Activated CD8-positive, alpha-beta T cell treated with anti-CD3 and anti-CD28 coated beads for 36 hours (primary cell): ENCODE measurements at regions of chr6 and their contacts with region 1.

Region 1: GRCh38 chr6:122491919-122492555 is 20.4 kb upstream of the SERINC1 start:
- DNase-seq: peak; percentile 86
- ATAC-seq: peak; percentile 98
- H3K4me3 Mint-ChIP-seq: no peak overlapping the region
- H3K27ac Mint-ChIP-seq: no peak overlapping the region
- H3K4me1 Mint-ChIP-seq: peaks cover 9% of the 10 kb centered on the region
- H3K27me3 Mint-ChIP-seq: no peaks in the 10 kb centered on the region
- CTCF ChIP-seq: peak; percentile 88

Region 2: GRCh38 chr6:122381497-122382265 is 110.4 kb before region 1 on chr6:
- CTCF ChIA-PET with region 1: interaction called, 13 read pairs
- POLR2A ChIA-PET with region 1: no interaction called
- intact Hi-C with region 1: no loop called
- DNase-seq: peak; percentile 75
- ATAC-seq: peak; percentile 94
- H3K4me3 Mint-ChIP-seq: no peak overlapping the region
- H3K27ac Mint-ChIP-seq: no peak overlapping the region
- H3K4me1 Mint-ChIP-seq: peaks cover 4% of the 10 kb centered on the region
- H3K27me3 Mint-ChIP-seq: peaks cover 4% of the 10 kb centered on the region
- CTCF ChIP-seq: peak; percentile 72

Region 3: DNA sequence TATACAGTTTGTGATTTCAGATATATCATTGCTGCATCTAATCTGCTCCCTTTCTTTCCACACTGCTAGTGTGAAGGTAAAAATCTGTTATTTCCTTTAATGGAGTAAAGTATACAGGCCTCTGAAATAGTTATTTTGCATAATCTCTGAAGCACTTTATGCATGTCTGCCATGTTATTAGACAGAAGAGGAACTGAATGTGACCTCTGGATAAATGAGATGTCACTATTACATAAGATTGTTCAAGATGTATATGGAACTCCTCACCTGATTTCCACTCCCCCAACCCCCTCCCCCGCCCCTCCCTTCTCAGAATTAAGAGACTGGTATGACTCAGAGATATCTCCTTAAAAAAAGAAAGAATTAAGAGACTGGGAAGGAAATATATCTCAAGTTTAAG is 46.8 kb before region 1 on chr6:
- CTCF ChIA-PET with region 1: no interaction called
- POLR2A ChIA-PET with region 1: no interaction called
- intact Hi-C with region 1: no loop called
- DNase-seq: no peak
- ATAC-seq: no peak
- H3K4me3 Mint-ChIP-seq: no peak overlapping the region
- H3K27ac Mint-ChIP-seq: peak overlapping the region; percentile 28
- H3K4me1 Mint-ChIP-seq: peaks cover 7% of the 10 kb centered on the region
- H3K27me3 Mint-ChIP-seq: no peaks in the 10 kb centered on the region
- CTCF ChIP-seq: no peak

Region 4: GRCh38 chr6:122471107-122472021 is 20.7 kb before region 1 on chr6 and contains the start of gene SERINC1:
- CTCF ChIA-PET with region 1: interaction called, 26 read pairs
- POLR2A ChIA-PET with region 1: interaction called, 3 read pairs
- intact Hi-C with region 1: no loop called
- DNase-seq: peak; percentile 96
- ATAC-seq: peak; percentile 98
- H3K4me3 Mint-ChIP-seq: peak within 1 kb of the TSS; percentile 94
- H3K27ac Mint-ChIP-seq: peak within 1 kb of the TSS; percentile 98
- H3K4me1 Mint-ChIP-seq: peaks cover 36% of the 10 kb centered on the region
- H3K27me3 Mint-ChIP-seq: no peaks in the 10 kb centered on the region
- CTCF ChIP-seq: no peak
- total RNA-seq, gene SERINC1: 40.2 to 40.5 TPM

Region 5: DNA sequence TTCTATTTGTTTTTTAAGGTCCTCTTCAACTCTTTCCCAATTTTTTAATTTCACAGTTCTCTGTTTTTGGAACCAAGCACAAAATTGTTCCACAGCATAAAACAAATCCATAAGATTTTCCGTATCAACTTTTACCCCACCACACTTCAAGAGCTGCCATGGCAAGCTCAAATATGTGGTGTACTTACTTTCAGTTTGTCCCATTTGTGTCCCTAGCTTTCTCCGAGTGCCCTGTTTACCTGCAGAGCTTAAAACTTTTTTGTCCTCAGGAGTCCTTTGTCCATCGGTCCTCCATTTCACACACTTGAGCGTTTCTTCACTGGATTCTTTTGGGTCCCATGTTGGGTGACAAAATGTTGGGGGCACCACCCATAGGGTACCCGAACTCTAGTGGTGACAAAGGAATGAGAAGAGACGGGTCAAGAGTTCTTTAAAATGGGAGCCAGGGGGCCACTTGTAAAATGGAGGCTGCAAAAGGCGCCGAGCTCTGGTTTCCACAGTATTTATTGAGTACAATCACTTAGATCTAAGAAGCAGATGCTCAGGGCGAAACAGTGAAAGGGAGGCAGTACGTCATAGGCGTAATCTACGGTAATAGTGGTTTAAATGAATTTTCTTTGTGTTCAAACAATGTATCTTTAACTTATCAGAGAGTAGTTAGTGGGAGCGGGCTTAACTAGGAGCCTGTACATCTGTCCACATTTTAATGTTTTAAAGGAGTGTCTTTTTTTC is 19.3 kb after region 1 on chr6:
- CTCF ChIA-PET with region 1: interaction called, 25 read pairs
- POLR2A ChIA-PET with region 1: no interaction called
- intact Hi-C with region 1: no loop called
- DNase-seq: no peak
- ATAC-seq: no peak
- H3K4me3 Mint-ChIP-seq: no peak overlapping the region
- H3K27ac Mint-ChIP-seq: no peak overlapping the region
- H3K4me1 Mint-ChIP-seq: no peaks in the 10 kb centered on the region
- H3K27me3 Mint-ChIP-seq: no peaks in the 10 kb centered on the region
- CTCF ChIP-seq: no peak

Region 6: GRCh38 chr6:122530440-122531046 is 38.5 kb after region 1 on chr6:
- CTCF ChIA-PET with region 1: interaction called, 242 read pairs
- POLR2A ChIA-PET with region 1: no interaction called
- intact Hi-C with region 1: loop called (anchors 1 kb)
- DNase-seq: peak; percentile 69
- ATAC-seq: peak; percentile 95
- H3K4me3 Mint-ChIP-seq: no peak overlapping the region
- H3K27ac Mint-ChIP-seq: no peak overlapping the region
- H3K4me1 Mint-ChIP-seq: no peaks in the 10 kb centered on the region
- H3K27me3 Mint-ChIP-seq: peaks cover 10% of the 10 kb centered on the region
- CTCF ChIP-seq: peak; percentile 87

Region 7: DNA sequence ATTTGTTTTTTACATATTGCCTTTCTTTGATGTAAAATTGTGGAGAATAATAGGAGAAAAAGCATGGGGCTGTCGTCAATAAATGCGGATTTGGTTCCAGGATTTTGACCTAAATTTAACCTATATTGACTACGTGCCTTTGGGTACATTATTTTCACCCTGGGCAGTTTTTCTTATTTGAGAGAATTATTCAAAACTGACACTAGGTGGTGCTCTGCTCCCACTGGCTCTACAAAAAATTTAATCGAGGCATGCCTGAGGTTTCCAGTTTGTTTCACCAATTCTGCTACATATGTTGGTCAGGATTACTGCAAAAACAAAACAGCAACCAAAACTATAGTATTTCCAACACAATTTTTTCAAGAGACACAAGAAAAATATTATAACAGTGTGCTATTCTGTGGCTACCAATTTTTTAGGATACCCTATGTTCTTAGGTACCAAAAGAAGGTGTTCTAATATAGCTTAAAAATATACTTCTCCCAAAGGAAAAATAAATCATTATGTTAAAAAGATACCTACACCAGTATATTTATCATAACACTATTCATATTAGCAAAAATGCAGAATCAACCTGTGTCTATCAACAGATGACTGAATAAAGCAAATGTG is 238.8 kb after region 1 on chr6:
- CTCF ChIA-PET with region 1: interaction called, 7 read pairs
- POLR2A ChIA-PET with region 1: no interaction called
- intact Hi-C with region 1: loop called (anchors 10 kb)
- DNase-seq: no peak
- ATAC-seq: peak; percentile 24
- H3K4me3 Mint-ChIP-seq: no peak overlapping the region
- H3K27ac Mint-ChIP-seq: no peak overlapping the region
- H3K4me1 Mint-ChIP-seq: no peaks in the 10 kb centered on the region
- H3K27me3 Mint-ChIP-seq: peaks cover 9% of the 10 kb centered on the region
- CTCF ChIP-seq: peak; percentile 84

Region 8: GRCh38 chr6:122839477-122839876 is 347.4 kb after region 1 on chr6:
- CTCF ChIA-PET with region 1: interaction called, 15 read pairs
- POLR2A ChIA-PET with region 1: no interaction called
- intact Hi-C with region 1: no loop called
- DNase-seq: peak; percentile 61
- ATAC-seq: peak; percentile 78
- H3K4me3 Mint-ChIP-seq: no peak overlapping the region
- H3K27ac Mint-ChIP-seq: no peak overlapping the region
- H3K4me1 Mint-ChIP-seq: no peaks in the 10 kb centered on the region
- H3K27me3 Mint-ChIP-seq: peaks cover 12% of the 10 kb centered on the region
- CTCF ChIP-seq: peak; percentile 71